Activated B cell treated with CpG ODN at 0.5 μM for 24 hours (primary cell): ENCODE measurements at regions of chr12 and their contacts with region 1.

Region 1: GRCh38 chr12:104201238-104202001 is 14.2 kb upstream of the TXNRD1 start:
- DNase-seq: peak; percentile 20
- ATAC-seq: peak; percentile 62
- H3K4me3 Mint-ChIP-seq: no peak overlapping the region
- H3K27ac Mint-ChIP-seq: no peak overlapping the region
- H3K4me1 Mint-ChIP-seq: peaks cover 2% of the 10 kb centered on the region
- H3K27me3 Mint-ChIP-seq: peaks cover 12% of the 10 kb centered on the region
- CTCF ChIP-seq: peak; percentile 31

Region 2: GRCh38 chr12:104234926-104235499 is 33.6 kb after region 1 on chr12:
- CTCF ChIA-PET with region 1: no interaction called
- POLR2A ChIA-PET with region 1: no interaction called
- intact Hi-C with region 1: no loop called
- DNase-seq: no peak
- ATAC-seq: no peak
- H3K4me3 Mint-ChIP-seq: no peak overlapping the region
- H3K27ac Mint-ChIP-seq: no peak overlapping the region
- H3K4me1 Mint-ChIP-seq: no peaks in the 10 kb centered on the region
- H3K27me3 Mint-ChIP-seq: peaks cover 4% of the 10 kb centered on the region
- CTCF ChIP-seq: no peak

Region 3: DNA sequence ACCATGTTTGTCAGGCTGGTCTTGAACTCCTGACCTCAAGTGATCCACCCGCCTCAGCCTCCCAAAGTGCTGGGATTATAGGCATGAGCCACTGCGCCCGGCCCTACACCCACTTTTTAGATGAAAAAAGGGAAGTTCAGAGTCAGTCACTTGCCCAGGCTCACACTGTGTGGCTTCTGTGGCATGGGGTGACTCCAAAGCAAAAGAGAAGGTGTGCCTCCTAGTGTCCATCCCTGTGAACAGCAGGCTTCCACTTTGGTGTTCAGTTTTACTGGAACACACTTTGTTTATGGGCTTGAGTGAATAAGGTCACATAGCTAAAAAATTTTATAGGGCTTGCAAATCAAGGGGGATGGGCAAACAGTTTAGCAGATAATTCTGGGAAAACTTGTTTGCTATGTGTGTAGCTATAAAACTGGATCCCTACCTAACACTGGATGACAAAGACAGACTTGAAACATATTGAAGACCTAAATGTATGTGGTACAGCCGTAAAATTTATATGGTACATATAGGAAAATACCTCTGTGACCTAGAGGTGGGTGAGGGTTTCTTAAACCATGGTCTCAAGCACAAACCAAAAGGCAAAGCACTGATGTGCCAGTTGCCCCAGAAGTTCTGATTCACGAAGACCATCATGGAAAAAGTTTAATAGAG is 157.1 kb after region 1 on chr12:
- CTCF ChIA-PET with region 1: interaction called, 3 read pairs
- POLR2A ChIA-PET with region 1: no interaction called
- intact Hi-C with region 1: loop called (anchors 1 kb)
- DNase-seq: peak; percentile 35
- ATAC-seq: peak; percentile 98
- H3K4me3 Mint-ChIP-seq: no peak overlapping the region
- H3K27ac Mint-ChIP-seq: peak overlapping the region; percentile 8
- H3K4me1 Mint-ChIP-seq: no peaks in the 10 kb centered on the region
- H3K27me3 Mint-ChIP-seq: no peaks in the 10 kb centered on the region
- CTCF ChIP-seq: no peak

Region 4: GRCh38 chr12:104877123-104877705 is 675.8 kb after region 1 on chr12:
- CTCF ChIA-PET with region 1: no interaction called
- POLR2A ChIA-PET with region 1: no interaction called
- intact Hi-C with region 1: loop called (anchors 5 kb)
- DNase-seq: no peak
- ATAC-seq: no peak
- H3K4me3 Mint-ChIP-seq: no peak overlapping the region
- H3K27ac Mint-ChIP-seq: no peak overlapping the region
- H3K4me1 Mint-ChIP-seq: no peaks in the 10 kb centered on the region
- H3K27me3 Mint-ChIP-seq: peaks cover 3% of the 10 kb centered on the region
- CTCF ChIP-seq: no peak